CD4-positive, alpha-beta memory T cell (primary cell): ENCODE measurements at regions of chr11 and their contacts with region 1.

Region 1: DNA sequence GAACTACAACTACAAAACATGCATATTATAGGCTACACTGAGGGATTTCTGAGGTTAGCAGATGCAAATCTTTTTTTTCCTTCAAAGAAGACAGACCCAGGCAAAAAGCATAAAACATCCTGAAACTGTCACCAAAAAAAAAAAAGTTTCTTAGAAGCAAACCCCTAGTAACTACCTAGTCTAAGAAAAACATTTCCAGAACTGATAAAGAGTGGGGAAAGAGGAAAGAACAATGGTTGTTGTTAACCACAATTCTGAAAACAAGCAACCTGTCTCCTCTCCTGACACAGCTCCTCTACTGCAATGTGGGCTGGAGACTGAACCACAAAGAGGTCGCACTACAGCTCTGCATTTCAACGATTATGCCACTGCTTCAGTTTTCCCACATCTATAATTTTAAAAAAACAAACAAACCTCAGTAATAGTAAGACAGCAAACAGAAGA is 15.0 kb downstream of the DENND5A start:
- DNase-seq: peak; percentile 50 to 65 (median 59)
- H3K4me3 ChIP-seq: no peak overlapping the region
- H3K4me3 Mint-ChIP-seq: peak overlapping the region; percentile 44 to 80 (median 66)
- H3K27ac ChIP-seq: peak overlapping the region; percentile 35
- H3K27ac Mint-ChIP-seq: peak overlapping the region; percentile 49 to 90 (median 84)
- H3K4me1 ChIP-seq: peaks cover 79% of the 10 kb centered on the region
- H3K4me1 Mint-ChIP-seq: peaks cover 35 to 79% (median 55%) of the 10 kb centered on the region in 4 donors
- H3K27me3 ChIP-seq: no peaks in the 10 kb centered on the region
- H3K27me3 Mint-ChIP-seq: no peaks in the 10 kb centered on the region

Region 2: DNA sequence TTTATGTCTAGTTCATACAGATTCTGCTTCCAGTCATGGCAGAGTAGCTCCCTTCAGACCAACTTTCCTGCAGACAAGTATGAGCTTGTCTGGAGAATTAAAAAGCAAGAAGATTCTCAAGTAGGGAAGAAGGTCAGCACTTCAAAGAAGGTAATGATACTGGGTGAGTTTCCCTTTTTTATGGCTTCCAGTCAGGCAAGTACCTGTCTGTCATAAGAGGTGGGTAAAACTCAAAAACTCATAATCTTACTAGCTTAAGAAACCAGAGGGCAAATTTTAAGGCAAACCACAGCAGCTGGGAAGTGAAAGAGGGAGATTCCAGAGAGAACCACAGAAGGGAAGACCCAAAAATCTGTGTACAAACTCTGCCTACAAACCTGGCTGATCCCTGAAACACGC is 39.2 kb before region 1 on chr11:
- CTCF ChIA-PET with region 1: interaction called, 4 read pairs
- POLR2A ChIA-PET with region 1: interaction called, 3 read pairs
- intact Hi-C with region 1: loop called (anchors 5 kb)
- DNase-seq: no peak
- H3K4me3 ChIP-seq: no peak overlapping the region
- H3K4me3 Mint-ChIP-seq: no peak overlapping the region
- H3K27ac ChIP-seq: no peak overlapping the region
- H3K27ac Mint-ChIP-seq: peak overlapping the region in 2 of 7 donors; percentile 10 to 14
- H3K4me1 ChIP-seq: peaks cover 47% of the 10 kb centered on the region
- H3K4me1 Mint-ChIP-seq: peaks cover 27 to 61% (median 46%) of the 10 kb centered on the region in 4 donors
- H3K27me3 ChIP-seq: no peaks in the 10 kb centered on the region
- H3K27me3 Mint-ChIP-seq: no peaks in the 10 kb centered on the region

Region 3: DNA sequence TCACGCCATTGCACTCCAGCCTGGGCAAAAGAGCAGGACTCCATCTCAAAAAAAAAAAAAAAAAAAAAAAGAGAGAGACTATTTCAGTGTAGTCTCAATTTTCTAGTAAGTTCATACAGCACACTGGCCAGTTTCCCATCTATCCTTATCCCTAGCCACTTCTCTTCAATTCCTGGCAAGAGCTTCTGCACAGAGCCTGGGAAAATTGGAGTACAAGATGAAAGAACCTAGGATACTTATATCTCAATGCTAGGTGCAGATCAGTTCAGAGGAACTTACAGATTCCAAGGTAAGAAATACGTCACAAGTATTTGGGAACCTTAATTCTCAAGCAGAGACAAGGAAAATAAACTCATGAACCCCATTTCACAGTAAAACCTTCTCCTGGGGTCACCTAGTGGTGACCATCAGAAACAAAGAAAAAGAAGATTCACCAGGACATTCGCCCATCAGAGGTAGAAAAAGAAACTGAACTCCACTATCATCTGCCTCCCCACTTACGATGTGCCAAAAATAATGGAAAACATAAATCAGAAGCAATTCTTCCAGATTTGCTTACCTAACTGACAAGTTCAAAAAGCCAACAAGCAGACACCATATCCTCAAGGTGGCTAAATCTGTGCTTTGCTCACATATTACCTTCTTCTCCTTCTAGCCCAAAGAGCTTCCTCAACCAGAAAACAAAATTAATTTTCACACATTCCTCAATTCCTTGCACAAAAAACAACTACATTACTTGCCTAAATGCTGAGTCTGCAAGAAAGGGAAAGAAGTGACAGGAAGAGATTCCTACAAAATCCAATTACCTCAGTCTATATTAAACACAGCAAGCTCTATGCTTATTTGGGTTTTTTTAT is 10.0 kb after region 1 on chr11:
- CTCF ChIA-PET with region 1: interaction called, 4 read pairs
- POLR2A ChIA-PET with region 1: interaction called, 19 read pairs
- intact Hi-C with region 1: loop called (anchors 1 kb)
- DNase-seq: no peak
- H3K4me3 ChIP-seq: no peak overlapping the region
- H3K4me3 Mint-ChIP-seq: peak overlapping the region; percentile 4 to 85 (median 56)
- H3K27ac ChIP-seq: no peak overlapping the region
- H3K27ac Mint-ChIP-seq: peak overlapping the region in 4 of 7 donors; percentile 6 to 72 (median 40)
- H3K4me1 ChIP-seq: peaks cover 36% of the 10 kb centered on the region
- H3K4me1 Mint-ChIP-seq: peaks cover 34 to 49% (median 40%) of the 10 kb centered on the region in 4 donors
- H3K27me3 ChIP-seq: no peaks in the 10 kb centered on the region
- H3K27me3 Mint-ChIP-seq: no peaks in the 10 kb centered on the region

Region 4: GRCh38 chr11:9265211-9266131 is 15.3 kb after region 1 on chr11 and contains the start of gene DENND5A:
- CTCF ChIA-PET with region 1: interaction called, 4 read pairs
- POLR2A ChIA-PET with region 1: interaction called, 19 read pairs
- intact Hi-C with region 1: loop called (anchors 1 kb)
- DNase-seq: peak; percentile 32 to 51 (median 35)
- H3K4me3 ChIP-seq: peak within 1 kb of the TSS; percentile 68 to 76
- H3K4me3 Mint-ChIP-seq: peak within 1 kb of the TSS; percentile 90 to 99 (median 97)
- H3K27ac ChIP-seq: peak within 1 kb of the TSS; percentile 48
- H3K27ac Mint-ChIP-seq: peak within 1 kb of the TSS; percentile 92 to 97 (median 95)
- H3K4me1 ChIP-seq: peaks cover 33% of the 10 kb centered on the region
- H3K4me1 Mint-ChIP-seq: peaks cover 25 to 39% (median 31%) of the 10 kb centered on the region in 4 donors
- H3K27me3 ChIP-seq: no peaks in the 10 kb centered on the region
- H3K27me3 Mint-ChIP-seq: peaks cover 0 to 2% of the 10 kb centered on the region in 2 donors
- total RNA-seq, gene DENND5A: 58.6 to 61.9 TPM

Region 5: DNA sequence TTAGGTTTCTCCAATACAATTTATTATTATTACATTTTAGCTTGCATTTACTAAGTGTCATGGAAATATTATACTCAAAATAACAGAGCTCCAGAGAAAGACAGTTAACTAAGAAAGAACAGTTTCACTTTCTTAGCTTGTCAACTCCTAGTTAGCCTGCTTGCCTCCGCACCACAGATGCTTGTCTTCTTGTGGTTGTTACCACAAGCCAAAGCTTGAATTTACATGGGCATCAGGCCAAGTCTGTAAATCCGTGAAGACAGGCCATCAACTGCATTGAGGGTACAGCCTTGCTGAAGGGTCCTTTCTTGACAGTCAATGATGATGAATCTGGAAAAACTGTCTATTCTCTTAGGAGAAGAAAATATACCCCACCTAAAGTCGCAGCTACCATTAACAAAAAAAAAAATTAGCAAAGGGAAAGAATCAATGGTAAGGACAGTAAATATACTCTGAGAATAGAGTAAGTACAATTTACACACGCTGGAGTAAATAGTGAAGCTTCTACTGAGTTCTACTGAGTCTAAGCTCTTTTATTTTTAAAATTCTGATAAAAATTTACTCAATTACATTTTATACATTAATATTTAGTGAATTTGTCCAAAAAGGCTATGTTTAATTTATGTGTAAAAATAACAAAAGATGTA is 30.6 kb after region 1 on chr11:
- CTCF ChIA-PET with region 1: interaction called, 3 read pairs
- POLR2A ChIA-PET with region 1: interaction called, 3 read pairs
- intact Hi-C with region 1: loop called (anchors 2 kb)
- DNase-seq: peak; percentile 61 to 73 (median 68)
- H3K4me3 ChIP-seq: no peak overlapping the region
- H3K4me3 Mint-ChIP-seq: peak overlapping the region; percentile 43 to 72 (median 58)
- H3K27ac ChIP-seq: no peak overlapping the region
- H3K27ac Mint-ChIP-seq: peak overlapping the region; percentile 3 to 63 (median 36)
- H3K4me1 ChIP-seq: peaks cover 17% of the 10 kb centered on the region
- H3K4me1 Mint-ChIP-seq: peaks cover 9 to 19% (median 14%) of the 10 kb centered on the region in 4 donors
- H3K27me3 ChIP-seq: no peaks in the 10 kb centered on the region
- H3K27me3 Mint-ChIP-seq: no peaks in the 10 kb centered on the region

Region 6: GRCh38 chr11:9448576-9449352 is 198.6 kb after region 1 on chr11:
- CTCF ChIA-PET with region 1: no interaction called
- POLR2A ChIA-PET with region 1: no interaction called
- intact Hi-C with region 1: no loop called
- DNase-seq: no peak
- H3K4me3 ChIP-seq: no peak overlapping the region
- H3K4me3 Mint-ChIP-seq: no peak overlapping the region
- H3K27ac ChIP-seq: no peak overlapping the region
- H3K27ac Mint-ChIP-seq: no peak overlapping the region
- H3K4me1 ChIP-seq: peaks cover 4% of the 10 kb centered on the region
- H3K4me1 Mint-ChIP-seq: peaks cover 3 to 10% (median 6%) of the 10 kb centered on the region in 4 donors
- H3K27me3 ChIP-seq: no peaks in the 10 kb centered on the region
- H3K27me3 Mint-ChIP-seq: no peaks in the 10 kb centered on the region

Region 7: GRCh38 chr11:10181811-10182210 is 931.6 kb after region 1 on chr11:
- CTCF ChIA-PET with region 1: no interaction called
- POLR2A ChIA-PET with region 1: no interaction called
- intact Hi-C with region 1: no loop called
- DNase-seq: no peak
- H3K4me3 ChIP-seq: no peak overlapping the region
- H3K4me3 Mint-ChIP-seq: no peak overlapping the region
- H3K27ac ChIP-seq: no peak overlapping the region
- H3K27ac Mint-ChIP-seq: no peak overlapping the region
- H3K4me1 ChIP-seq: no peaks in the 10 kb centered on the region
- H3K4me1 Mint-ChIP-seq: peaks cover 0 to 11% (median 4%) of the 10 kb centered on the region in 4 donors
- H3K27me3 ChIP-seq: no peaks in the 10 kb centered on the region
- H3K27me3 Mint-ChIP-seq: no peaks in the 10 kb centered on the region